ENCODE measurements at regions of chr16 and their contacts with region 1.

Region 1: DNA sequence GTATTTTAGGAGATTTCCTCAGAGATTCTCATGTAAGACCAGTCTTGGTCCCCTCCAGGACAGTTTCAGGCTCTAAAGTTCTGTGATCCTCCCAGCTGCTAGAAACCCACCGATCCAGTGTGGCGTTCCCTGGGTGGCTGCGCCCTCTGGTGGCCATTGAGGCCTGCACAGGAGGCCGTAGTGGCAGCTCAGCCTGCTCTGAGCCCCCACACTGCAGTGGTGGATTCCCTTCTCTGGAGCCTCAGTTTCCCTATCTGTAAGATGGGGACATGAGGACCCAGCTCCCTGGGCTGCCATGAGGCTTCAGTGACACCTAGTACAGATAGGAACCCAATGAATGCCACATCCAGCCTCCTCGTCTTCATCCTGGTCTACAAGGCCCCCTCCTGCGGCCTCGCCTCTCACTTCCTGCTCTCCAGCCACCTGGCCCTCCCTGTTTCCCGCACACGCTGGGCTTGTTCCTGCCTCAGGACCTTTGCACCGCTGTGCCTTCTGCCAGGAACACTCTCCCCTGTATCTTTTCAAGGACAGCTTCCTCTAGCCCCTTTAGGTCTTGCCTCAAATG is 16.5 kb downstream of the CCDC102A start:
- H3K4me3 ChIP-seq: no peak overlapping the region
- H3K27ac ChIP-seq: no peak overlapping the region
- H3K4me1 ChIP-seq: no peaks in the 10 kb centered on the region
- CTCF ChIP-seq: peak; percentile 85

Region 2: DNA sequence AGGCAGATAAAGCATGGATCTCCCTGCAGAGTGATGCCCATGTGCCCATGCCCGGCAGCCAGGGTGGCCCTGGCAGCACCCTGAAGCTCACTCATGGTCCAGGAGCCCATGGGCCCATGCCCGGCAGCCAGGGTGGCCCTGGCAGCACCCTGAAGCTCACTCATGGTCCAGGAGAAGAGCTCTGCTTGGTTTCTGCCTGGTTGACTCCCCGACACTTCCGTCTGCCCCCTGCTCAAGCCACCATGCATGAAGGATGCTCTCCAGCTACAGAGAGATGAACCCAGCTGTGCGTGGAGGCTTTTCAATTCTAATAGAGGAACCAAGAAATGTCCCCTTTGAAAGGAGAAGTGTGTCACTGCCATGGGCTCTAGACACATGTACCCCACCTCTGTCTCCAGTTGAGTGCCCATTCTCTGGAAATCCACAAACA is 106.6 kb before region 1 on chr16:
- CTCF ChIA-PET with region 1: interaction called, 86 read pairs
- POLR2A ChIA-PET with region 1: interaction called, 3 read pairs
- H3K4me3 ChIP-seq: no peak overlapping the region
- H3K27ac ChIP-seq: no peak overlapping the region
- H3K4me1 ChIP-seq: no peaks in the 10 kb centered on the region
- CTCF ChIP-seq: no peak

Region 3: DNA sequence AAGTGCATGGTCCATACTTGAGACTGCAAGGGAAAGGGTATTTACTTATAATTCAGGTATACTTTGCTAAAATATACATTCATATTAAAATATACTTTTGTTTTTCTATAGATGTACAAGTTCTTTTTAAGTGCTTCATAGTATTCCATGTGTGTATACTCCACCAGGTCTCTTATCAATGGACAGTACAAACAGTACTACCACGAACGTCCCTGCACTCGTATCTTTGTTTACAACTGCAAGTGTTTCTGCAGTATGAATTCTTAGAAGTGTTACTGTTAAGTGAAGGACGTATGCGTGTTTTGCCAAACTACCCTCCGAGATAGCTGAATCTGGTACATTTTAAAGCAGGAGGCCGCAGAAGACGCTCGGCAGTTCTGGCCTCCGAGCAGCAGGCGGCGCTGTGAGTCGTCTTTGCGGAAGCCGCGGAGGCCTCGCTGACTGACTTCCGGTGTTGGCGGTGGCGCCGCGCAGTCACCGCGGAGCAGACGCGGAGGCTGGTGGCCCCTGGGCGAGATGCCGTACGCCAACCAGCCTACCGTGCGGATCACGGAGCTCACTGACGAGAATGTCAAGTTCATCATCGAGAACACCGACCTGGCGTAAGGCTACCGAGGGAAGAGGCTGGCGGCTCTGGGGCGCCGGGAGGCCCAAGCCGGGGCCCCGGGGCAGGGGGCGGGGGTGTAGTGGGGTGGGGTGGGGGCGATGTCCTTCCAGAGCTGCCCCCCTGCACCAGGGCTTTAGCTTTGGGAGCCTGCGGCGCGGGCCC is 57.5 kb before region 1 on chr16 and contains the start of gene POLR2C:
- CTCF ChIA-PET with region 1: interaction called, 14 read pairs
- POLR2A ChIA-PET with region 1: interaction called, 10 read pairs
- H3K4me3 ChIP-seq: peak within 1 kb of the TSS; percentile 83
- H3K27ac ChIP-seq: peak within 1 kb of the TSS; percentile 45
- H3K4me1 ChIP-seq: no peaks in the 10 kb centered on the region; the same call in 1 of the 2 replicates
- CTCF ChIP-seq: peak; percentile 97

Region 4: DNA sequence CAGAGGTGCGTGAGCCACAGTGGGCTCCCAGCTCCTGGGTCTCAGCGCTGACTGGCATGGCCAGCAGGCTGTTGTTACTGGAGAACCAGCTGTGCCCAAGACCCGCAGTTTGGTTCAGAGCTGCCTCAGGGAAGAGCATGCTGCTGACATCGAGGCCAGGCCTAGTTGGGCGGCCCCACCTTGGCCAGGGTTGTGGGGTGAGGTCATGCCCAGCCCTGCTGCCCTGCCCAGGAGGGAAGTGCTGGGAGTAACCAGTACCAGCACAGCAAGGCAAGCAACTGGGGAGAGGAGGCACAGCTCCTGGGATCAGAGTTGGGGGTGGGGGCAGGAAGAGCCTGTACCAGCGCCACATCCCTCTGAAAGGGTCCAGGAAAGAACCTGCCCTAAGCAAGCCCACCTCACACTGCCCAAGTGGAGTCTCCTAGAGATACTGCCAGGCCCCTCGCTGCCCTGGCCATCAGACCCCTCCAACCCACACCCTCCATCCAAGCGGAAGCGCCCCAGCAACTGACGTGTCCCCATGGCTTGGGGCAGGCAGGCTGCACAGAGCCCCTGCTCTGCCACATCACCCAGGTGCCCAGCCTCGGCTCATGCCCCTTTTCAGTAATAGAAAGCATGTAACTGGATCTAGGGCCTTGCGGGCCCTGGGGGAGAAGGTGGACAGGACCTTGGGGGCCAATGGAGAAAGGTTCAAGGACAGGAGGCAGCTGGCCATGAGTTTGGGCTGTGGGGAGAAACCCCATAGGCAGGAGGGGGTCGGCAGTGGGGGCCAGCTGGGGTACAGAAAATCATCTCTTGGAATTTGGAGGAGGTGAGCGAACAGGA is 34.6 kb before region 1 on chr16:
- CTCF ChIA-PET with region 1: interaction called, 16 read pairs
- POLR2A ChIA-PET with region 1: no interaction called
- H3K4me3 ChIP-seq: peak overlapping the region; percentile 65
- H3K27ac ChIP-seq: no peak overlapping the region
- H3K4me1 ChIP-seq: no peaks in the 10 kb centered on the region
- CTCF ChIP-seq: no peak

Region 5: DNA sequence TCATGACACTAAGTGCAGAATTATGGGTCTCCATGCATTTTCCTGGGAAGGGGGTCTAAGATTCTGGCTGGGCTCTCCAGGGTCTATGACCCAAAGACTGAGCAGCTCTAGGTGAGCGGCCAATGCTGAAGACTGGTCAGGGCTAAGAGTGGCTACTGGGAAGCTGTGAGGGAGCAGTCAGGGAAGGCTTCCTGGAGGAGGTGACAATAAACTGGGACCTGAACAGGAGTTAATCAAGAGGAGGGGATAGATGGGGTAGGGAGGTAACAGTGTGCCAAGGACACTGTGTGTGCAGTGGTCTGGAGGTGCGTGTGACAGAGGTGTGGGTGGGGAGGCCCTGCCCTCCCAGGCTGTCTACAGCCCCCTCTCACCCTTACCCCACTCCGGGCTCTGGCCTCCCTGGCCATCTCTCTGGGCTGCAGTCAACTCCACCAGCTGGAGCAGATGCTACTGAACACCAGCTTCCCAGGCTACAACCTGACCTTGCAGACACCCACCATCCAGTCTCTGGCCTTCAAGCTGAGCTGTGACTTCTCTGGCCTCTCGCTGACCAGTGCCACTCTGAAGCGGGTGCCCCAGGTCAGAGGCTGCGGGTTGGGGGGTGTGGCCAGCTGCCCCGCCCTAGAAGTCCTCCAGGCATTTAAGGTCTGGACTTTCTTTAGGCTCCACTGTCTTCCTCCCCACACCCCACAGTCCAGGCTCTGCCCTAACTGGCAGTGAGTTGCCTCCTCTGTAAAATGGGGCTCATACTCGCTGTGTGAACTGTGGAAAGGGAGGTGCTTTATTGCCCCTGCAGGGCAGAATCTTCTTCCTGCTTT is 43.0 kb after region 1 on chr16:
- CTCF ChIA-PET with region 1: no interaction called
- POLR2A ChIA-PET with region 1: no interaction called
- H3K4me3 ChIP-seq: no peak overlapping the region
- H3K27ac ChIP-seq: no peak overlapping the region
- H3K4me1 ChIP-seq: no peaks in the 10 kb centered on the region
- CTCF ChIP-seq: no peak

Measured in HEK293 (cell line).